MCF 10A (cell line): ENCODE measurements at regions of chr19 and their contacts with region 1.

Region 1: DNA sequence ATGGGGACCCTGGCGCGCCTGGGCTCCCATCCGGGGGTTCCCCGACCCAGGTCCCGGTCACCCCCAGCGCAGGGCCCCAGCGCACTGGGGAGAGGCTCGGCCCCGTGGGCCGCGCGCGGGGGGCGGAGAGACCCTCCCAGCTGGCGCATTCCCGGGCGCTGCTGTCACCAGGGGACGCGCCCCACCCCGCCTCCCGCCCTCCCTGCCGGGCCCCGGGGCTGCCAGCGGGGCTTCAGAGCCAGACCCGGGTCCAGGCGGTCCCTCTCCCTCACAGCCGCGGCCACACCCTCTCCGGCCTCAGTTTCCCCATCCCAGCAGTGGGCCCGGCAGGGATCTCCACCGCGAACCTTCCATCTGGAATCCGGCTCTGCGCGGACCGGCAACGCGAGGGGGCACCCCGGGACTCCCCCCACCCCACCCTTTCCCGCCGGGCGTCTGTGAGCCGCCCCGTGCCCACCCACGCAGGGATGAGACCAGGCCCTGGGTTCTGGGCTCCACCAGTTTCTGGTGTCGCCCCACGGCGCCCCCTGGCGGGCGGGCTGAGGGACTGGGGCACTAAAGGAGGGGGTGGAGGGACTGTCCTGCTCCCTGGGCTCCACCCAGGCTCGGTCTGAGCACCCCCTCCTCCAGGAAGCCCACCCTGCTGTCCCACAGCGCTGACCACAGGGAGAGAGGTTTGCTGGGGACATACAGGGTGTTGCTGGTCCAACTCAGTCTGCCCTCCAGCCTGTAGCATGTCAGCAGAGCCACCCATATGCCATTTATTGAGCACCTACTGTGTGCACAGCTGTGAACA is 878 bp upstream of the ADAMTSL5 start:
- DNase-seq: peak; percentile 62
- H3K4me3 Mint-ChIP-seq: peak overlapping the region; percentile 75
- H3K27ac Mint-ChIP-seq: no peak overlapping the region
- H3K4me1 Mint-ChIP-seq: peaks cover 5% of the 10 kb centered on the region
- H3K27me3 Mint-ChIP-seq: no peaks in the 10 kb centered on the region
- CTCF ChIP-seq: peak; percentile 76

Region 2: GRCh38 chr19:1438035-1438932 is 75.4 kb before region 1 on chr19 and contains the start of gene RPS15:
- CTCF ChIA-PET with region 1: no interaction called
- POLR2A ChIA-PET with region 1: interaction called, 3 read pairs
- intact Hi-C with region 1: loop called (anchors 1 kb)
- DNase-seq: peak; percentile 92
- H3K4me3 Mint-ChIP-seq: peak within 1 kb of the TSS; percentile 98
- H3K27ac Mint-ChIP-seq: peak within 1 kb of the TSS; percentile 100
- H3K4me1 Mint-ChIP-seq: peaks cover 6% of the 10 kb centered on the region
- H3K27me3 Mint-ChIP-seq: no peaks in the 10 kb centered on the region
- CTCF ChIP-seq: peak; percentile 87
- total RNA-seq, gene RPS15: 1,168 and 1,243 TPM in 2 replicates

Region 3: GRCh38 chr19:1465191-1466016 is 48.3 kb before region 1 on chr19:
- CTCF ChIA-PET with region 1: no interaction called
- POLR2A ChIA-PET with region 1: no interaction called
- intact Hi-C with region 1: loop called (anchors 2 kb)
- DNase-seq: peak; percentile 55
- H3K4me3 Mint-ChIP-seq: no peak overlapping the region
- H3K27ac Mint-ChIP-seq: no peak overlapping the region
- H3K4me1 Mint-ChIP-seq: no peaks in the 10 kb centered on the region
- H3K27me3 Mint-ChIP-seq: no peaks in the 10 kb centered on the region
- CTCF ChIP-seq: peak; percentile 33